Activated CD4-positive, alpha-beta T cell treated with anti-CD3 and anti-CD28 coated beads for 36 hours (primary cell): ENCODE measurements at regions of chr16 and their contacts with region 1.

Region 1: GRCh38 chr16:25426829-25427228 is 169.2 kb upstream of the ZKSCAN2 start:
- DNase-seq: no peak
- ATAC-seq: no peak
- H3K4me3 Mint-ChIP-seq: no peak overlapping the region
- H3K27ac Mint-ChIP-seq: no peak overlapping the region
- H3K4me1 Mint-ChIP-seq: no peaks in the 10 kb centered on the region
- H3K27me3 Mint-ChIP-seq: peaks cover 8% of the 10 kb centered on the region

Region 2: GRCh38 chr16:25289466-25289865 is 137.4 kb before region 1 on chr16:
- CTCF ChIA-PET with region 1: interaction called, 3 read pairs
- POLR2A ChIA-PET with region 1: interaction called, 11 read pairs
- intact Hi-C with region 1: no loop called
- DNase-seq: no peak
- ATAC-seq: no peak
- H3K4me3 Mint-ChIP-seq: no peak overlapping the region
- H3K27ac Mint-ChIP-seq: no peak overlapping the region
- H3K4me1 Mint-ChIP-seq: no peaks in the 10 kb centered on the region
- H3K27me3 Mint-ChIP-seq: no peaks in the 10 kb centered on the region

Region 3: DNA sequence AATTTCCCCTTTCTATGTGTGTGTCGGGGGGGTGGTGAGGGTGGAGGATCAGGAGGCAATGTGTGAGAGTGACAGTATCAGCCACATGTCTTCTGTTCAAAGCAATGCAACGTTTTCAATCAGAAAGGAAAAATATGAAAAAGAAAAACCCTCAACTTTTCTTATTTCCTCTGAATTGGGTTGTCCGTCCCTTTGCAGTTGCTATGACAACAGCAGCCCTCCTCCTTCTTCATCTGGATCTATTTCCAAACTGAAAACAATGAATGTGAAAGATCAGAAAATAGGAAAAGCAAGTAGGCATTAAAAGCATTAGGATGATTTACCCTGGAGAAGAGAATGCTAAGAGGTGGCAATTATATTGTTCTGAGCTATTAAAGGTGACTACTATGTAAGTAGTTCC is 104.8 kb before region 1 on chr16:
- CTCF ChIA-PET with region 1: no interaction called
- POLR2A ChIA-PET with region 1: no interaction called
- intact Hi-C with region 1: no loop called
- DNase-seq: no peak
- ATAC-seq: no peak
- H3K4me3 Mint-ChIP-seq: no peak overlapping the region
- H3K27ac Mint-ChIP-seq: no peak overlapping the region
- H3K4me1 Mint-ChIP-seq: no peaks in the 10 kb centered on the region
- H3K27me3 Mint-ChIP-seq: peaks cover 10% of the 10 kb centered on the region

Region 4: GRCh38 chr16:25501530-25502255 is 74.9 kb after region 1 on chr16:
- CTCF ChIA-PET with region 1: no interaction called
- POLR2A ChIA-PET with region 1: no interaction called
- intact Hi-C with region 1: no loop called
- DNase-seq: no peak
- ATAC-seq: no peak
- H3K4me3 Mint-ChIP-seq: no peak overlapping the region
- H3K27ac Mint-ChIP-seq: no peak overlapping the region
- H3K4me1 Mint-ChIP-seq: no peaks in the 10 kb centered on the region
- H3K27me3 Mint-ChIP-seq: peaks cover 15% of the 10 kb centered on the region

Region 5: GRCh38 chr16:25690552-25691143 is 263.8 kb after region 1 on chr16:
- CTCF ChIA-PET with region 1: no interaction called
- POLR2A ChIA-PET with region 1: no interaction called
- intact Hi-C with region 1: no loop called
- DNase-seq: no peak
- ATAC-seq: no peak
- H3K4me3 Mint-ChIP-seq: no peak overlapping the region
- H3K27ac Mint-ChIP-seq: no peak overlapping the region
- H3K4me1 Mint-ChIP-seq: no peaks in the 10 kb centered on the region
- H3K27me3 Mint-ChIP-seq: peaks cover 52% of the 10 kb centered on the region